ENCODE measurements at regions of chr12 and their contacts with region 1.

Region 1: DNA sequence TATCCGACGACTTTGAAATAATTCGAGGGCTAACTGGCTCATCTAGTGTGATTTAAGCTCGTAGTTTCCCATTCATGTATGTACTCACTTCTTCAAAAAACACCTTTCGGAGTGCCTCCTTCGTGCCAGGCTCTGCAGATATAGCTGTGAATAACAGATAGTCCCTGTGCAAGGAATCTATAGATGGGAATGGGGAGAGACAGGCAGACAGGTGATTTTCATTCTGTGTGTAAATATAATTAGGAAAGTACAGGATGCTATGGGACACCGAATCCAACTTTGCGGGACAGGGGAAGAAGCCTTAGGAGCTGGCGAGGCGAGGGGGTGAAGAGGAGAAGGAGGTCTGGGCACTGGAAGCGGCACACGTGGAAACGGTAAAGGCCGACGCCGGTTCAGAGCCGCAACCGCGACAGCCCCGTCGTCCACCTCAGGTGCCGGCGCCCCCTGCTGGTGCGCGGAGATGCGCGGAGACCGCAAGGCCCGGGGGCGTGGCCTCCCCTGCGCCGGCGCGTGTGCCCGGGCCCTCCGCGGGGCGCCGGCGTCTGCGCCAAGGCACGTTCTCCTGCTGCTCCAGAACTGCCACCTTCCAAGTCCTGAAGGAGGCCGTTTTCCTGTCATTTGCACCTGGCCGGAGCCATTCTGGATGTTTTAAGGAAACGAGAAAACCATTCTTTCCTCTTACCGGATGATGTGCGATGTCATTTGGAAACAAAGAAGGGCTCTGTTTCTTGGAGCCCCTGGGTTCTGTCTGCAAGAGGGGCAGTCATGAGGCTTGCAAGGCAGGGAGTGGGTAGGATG is 18.0 kb upstream of the CACNA1C start:
- DNase-seq: peak; percentile 71 to 94 (median 83)
- ATAC-seq: peak; percentile 99
- H3K4me3 ChIP-seq: peak overlapping the region; percentile 47
- H3K4me3 Mint-ChIP-seq: peak overlapping the region; percentile 73
- H3K27ac ChIP-seq: no peak overlapping the region
- H3K27ac Mint-ChIP-seq: no peak overlapping the region
- H3K4me1 ChIP-seq: peaks cover 11% of the 10 kb centered on the region
- H3K4me1 Mint-ChIP-seq: peaks cover 16% of the 10 kb centered on the region
- H3K27me3 ChIP-seq: peaks cover 3 to 26% of the 10 kb centered on the region in 2 experiments
- H3K27me3 Mint-ChIP-seq: peaks cover 31% of the 10 kb centered on the region
- CTCF ChIP-seq: peak; percentile 91

Region 2: GRCh38 chr12:1927751-1928351 is 107.0 kb before region 1 on chr12:
- CTCF ChIA-PET with region 1: no interaction called
- POLR2A ChIA-PET with region 1: no interaction called
- intact Hi-C with region 1: no loop called
- DNase-seq: no peak
- ATAC-seq: no peak
- H3K4me3 ChIP-seq: no peak overlapping the region
- H3K4me3 Mint-ChIP-seq: no peak overlapping the region
- H3K27ac ChIP-seq: no peak overlapping the region
- H3K27ac Mint-ChIP-seq: no peak overlapping the region
- H3K4me1 ChIP-seq: peaks cover 23% of the 10 kb centered on the region
- H3K4me1 Mint-ChIP-seq: peaks cover 25% of the 10 kb centered on the region
- H3K27me3 ChIP-seq: no peaks in the 10 kb centered on the region
- H3K27me3 Mint-ChIP-seq: no peaks in the 10 kb centered on the region
- CTCF ChIP-seq: no peak

Region 3: GRCh38 chr12:2057041-2057794 is 22.4 kb after region 1 on chr12:
- CTCF ChIA-PET with region 1: no interaction called
- POLR2A ChIA-PET with region 1: no interaction called
- intact Hi-C with region 1: no loop called
- DNase-seq: peak in 7 of 14 experiments; percentile 16 to 51 (median 27)
- ATAC-seq: no peak
- H3K4me3 ChIP-seq: no peak overlapping the region
- H3K4me3 Mint-ChIP-seq: no peak overlapping the region
- H3K27ac ChIP-seq: no peak overlapping the region
- H3K27ac Mint-ChIP-seq: no peak overlapping the region
- H3K4me1 ChIP-seq: peaks cover 10% of the 10 kb centered on the region
- H3K4me1 Mint-ChIP-seq: peaks cover 9% of the 10 kb centered on the region
- H3K27me3 ChIP-seq: peaks cover 30 to 33% of the 10 kb centered on the region in 2 experiments
- H3K27me3 Mint-ChIP-seq: peaks cover 47% of the 10 kb centered on the region
- CTCF ChIP-seq: no peak

Region 4: GRCh38 chr12:2783936-2784600 is 749.2 kb after region 1 on chr12:
- CTCF ChIA-PET with region 1: no interaction called
- POLR2A ChIA-PET with region 1: no interaction called
- intact Hi-C with region 1: loop called in 1 of 2 experiments (anchors 10 kb)
- DNase-seq: peak in 13 of 14 experiments; percentile 12 to 72 (median 34)
- ATAC-seq: peak; percentile 91
- H3K4me3 ChIP-seq: peak overlapping the region; percentile 29
- H3K4me3 Mint-ChIP-seq: peak overlapping the region; percentile 80
- H3K27ac ChIP-seq: no peak overlapping the region
- H3K27ac Mint-ChIP-seq: no peak overlapping the region
- H3K4me1 ChIP-seq: peaks cover 10% of the 10 kb centered on the region
- H3K4me1 Mint-ChIP-seq: peaks cover 9% of the 10 kb centered on the region
- H3K27me3 ChIP-seq: no peaks in the 10 kb centered on the region
- H3K27me3 Mint-ChIP-seq: peaks cover 19% of the 10 kb centered on the region
- CTCF ChIP-seq: peak; percentile 90

Measured in CD4-positive, alpha-beta T cell (primary cell).